ENCODE measurements at regions of chr2 and their contacts with region 1.

Region 1: DNA sequence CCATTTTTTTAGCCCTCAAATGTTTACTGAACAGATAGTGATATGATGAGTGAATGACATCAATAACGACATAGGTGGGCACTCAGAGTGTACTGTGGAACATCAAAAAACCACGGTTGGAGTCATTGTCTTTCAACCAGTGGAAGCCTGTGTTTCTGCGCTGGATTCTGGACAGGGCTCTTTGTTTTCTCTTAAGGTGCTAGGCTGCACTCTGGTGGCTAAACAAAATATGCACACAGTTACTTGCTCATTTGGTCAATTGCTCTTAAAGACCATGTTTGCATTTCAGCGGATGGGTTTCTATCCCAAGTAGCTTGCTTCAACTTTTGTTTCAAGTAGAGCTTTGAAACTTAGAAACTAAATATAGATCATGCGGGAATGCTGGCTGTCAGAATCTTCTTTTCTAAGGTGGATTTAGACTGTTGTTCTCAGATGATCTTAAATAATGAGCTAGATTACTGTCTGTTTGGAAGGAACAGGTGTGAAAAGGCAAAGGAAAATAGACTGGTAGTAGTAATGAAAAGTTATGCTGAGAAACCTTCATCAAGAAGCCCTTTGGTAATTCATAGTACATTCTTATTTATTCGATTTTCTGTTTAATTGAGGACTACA is 48.5 kb upstream of the LYPD6B start:
- DNase-seq: peak; percentile 80
- ATAC-seq: peak; percentile 90
- H3K4me3 ChIP-seq: no peak overlapping the region
- H3K27ac ChIP-seq: no peak overlapping the region
- H3K4me1 ChIP-seq: no peaks in the 10 kb centered on the region
- H3K27me3 ChIP-seq: no peaks in the 10 kb centered on the region
- CTCF ChIP-seq: peak; percentile 71
- POLR2A ChIP-seq: no peak
- RAD21 ChIP-seq: peak; percentile 80

Region 2: GRCh38 chr2:147937744-147938349 is 1052.1 kb before region 1 on chr2:
- CTCF ChIA-PET with region 1: interaction called, 5 read pairs
- POLR2A ChIA-PET with region 1: no interaction called
- dilution Hi-C with region 1: no loop called
- in situ Hi-C with region 1: no loop called
- intact Hi-C with region 1: loop called (anchors 1 kb)
- DNase-seq: peak; percentile 40
- ATAC-seq: peak; percentile 83
- H3K4me3 ChIP-seq: no peak overlapping the region
- H3K27ac ChIP-seq: no peak overlapping the region
- H3K4me1 ChIP-seq: no peaks in the 10 kb centered on the region
- H3K27me3 ChIP-seq: no peaks in the 10 kb centered on the region
- CTCF ChIP-seq: peak; percentile 84
- POLR2A ChIP-seq: no peak
- RAD21 ChIP-seq: peak; percentile 73

Region 3: DNA sequence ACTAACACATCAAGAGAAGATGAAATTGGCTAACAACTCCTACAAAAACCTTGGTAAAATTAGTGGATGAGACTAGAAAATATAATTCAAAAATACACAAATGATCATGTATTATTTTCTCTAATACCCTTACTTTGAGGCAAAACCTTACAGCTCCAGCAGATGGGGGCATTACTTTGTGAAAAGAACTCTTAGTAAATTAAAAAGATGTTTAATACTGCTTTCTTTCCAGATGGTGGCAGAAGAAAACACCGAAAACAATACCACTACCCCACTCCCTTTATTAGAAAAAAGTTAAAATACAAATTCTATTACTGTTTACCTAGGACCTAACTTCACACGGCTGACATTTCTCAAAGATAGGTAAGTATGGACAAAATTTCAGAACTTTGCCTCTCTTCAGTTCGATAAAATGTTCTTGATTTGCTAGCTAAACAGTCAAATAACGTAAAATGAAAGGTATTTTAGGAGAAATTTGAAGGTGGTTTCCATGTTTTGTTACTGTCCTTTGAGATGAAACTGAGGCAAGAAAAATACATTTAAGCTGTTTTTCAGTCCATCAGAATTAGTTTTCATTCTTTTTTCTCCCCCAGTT is 1000.1 kb before region 1 on chr2:
- CTCF ChIA-PET with region 1: no interaction called
- POLR2A ChIA-PET with region 1: no interaction called
- dilution Hi-C with region 1: no loop called
- in situ Hi-C with region 1: loop called (anchors 25 kb)
- intact Hi-C with region 1: loop called (anchors 1 kb)
- DNase-seq: peak; percentile 72
- ATAC-seq: peak; percentile 95
- H3K4me3 ChIP-seq: no peak overlapping the region
- H3K27ac ChIP-seq: no peak overlapping the region
- H3K4me1 ChIP-seq: no peaks in the 10 kb centered on the region; the same call in none of the 2 replicates
- H3K27me3 ChIP-seq: no peaks in the 10 kb centered on the region
- CTCF ChIP-seq: peak; percentile 99
- POLR2A ChIP-seq: no peak
- RAD21 ChIP-seq: peak; percentile 96

Region 4: DNA sequence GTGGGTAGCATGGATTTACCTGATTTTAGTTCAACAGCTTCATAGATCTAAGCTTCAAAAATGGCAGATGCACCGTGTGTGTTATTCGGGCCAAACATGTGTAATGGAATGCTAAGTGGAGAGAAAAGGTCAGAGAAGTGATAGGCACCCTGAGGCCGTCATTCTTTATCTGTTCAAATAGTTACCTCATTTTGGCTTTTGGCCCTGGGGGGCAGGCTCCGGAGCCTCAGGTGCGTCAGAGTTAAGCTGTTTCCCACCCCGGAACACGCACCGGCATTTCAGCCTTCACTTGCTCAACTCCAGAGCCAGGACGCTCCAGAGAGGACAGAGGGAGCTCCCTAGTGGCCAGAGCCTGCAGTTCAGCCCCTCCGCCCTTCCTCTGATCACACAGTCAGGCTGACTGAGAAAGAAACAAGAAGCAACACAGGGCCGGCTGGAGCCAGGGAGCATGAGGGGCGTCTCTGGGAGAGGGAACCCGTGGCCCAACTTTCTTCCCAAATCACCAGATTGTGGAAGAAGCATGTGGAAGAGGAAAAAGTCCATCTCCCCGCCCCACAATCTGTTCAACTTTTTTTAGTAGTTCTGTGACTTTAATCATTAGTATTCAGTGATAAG is 480.6 kb before region 1 on chr2:
- CTCF ChIA-PET with region 1: no interaction called
- POLR2A ChIA-PET with region 1: no interaction called
- dilution Hi-C with region 1: no loop called
- in situ Hi-C with region 1: no loop called
- intact Hi-C with region 1: loop called (anchors 5 kb)
- DNase-seq: peak; percentile 82
- ATAC-seq: peak; percentile 100
- H3K4me3 ChIP-seq: no peak overlapping the region; the same call in 1 of the 2 replicates
- H3K27ac ChIP-seq: no peak overlapping the region
- H3K4me1 ChIP-seq: no peaks in the 10 kb centered on the region
- H3K27me3 ChIP-seq: no peaks in the 10 kb centered on the region
- CTCF ChIP-seq: peak; percentile 95
- POLR2A ChIP-seq: no peak
- RAD21 ChIP-seq: peak; percentile 92

Region 5: DNA sequence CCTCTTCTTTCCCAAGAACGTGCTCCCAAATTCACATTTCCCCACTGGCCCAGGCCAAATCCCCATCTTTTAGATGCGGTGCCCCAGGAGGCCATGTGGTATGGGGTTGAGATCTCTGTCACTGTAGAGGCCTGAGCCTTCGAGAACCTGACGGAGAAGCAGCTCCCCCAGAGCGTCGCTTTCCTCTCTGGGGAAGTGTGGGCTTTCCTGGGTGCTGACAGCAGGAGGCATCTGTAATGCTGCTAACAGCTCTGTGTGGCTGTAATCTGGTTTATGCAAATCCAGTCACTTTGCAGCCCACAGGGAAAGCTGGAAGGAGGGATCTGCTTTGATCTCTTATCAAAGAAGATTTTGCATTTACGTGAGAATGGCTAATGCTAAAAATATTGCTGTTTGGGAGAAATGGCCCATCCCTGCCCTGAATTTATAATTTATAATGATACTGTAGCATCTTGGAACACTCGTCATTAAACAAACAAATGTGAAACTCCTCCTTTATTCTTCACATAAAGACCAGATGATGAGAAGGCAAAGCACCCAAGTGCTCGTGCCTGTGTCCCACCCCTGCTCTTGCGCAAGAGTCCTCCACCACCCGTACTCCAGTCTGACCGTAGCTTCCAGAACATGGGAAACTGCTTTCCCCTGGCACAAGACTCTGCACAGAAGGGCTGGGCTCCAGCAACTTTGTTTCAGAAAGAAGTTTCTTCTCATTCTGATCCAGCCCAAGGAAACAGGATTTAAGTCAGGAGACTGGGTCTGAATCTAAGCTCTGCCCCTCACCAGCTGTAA is 455.4 kb before region 1 on chr2:
- CTCF ChIA-PET with region 1: no interaction called
- POLR2A ChIA-PET with region 1: interaction called, 10 read pairs
- dilution Hi-C with region 1: no loop called
- in situ Hi-C with region 1: no loop called
- intact Hi-C with region 1: loop called (anchors 5 kb)
- DNase-seq: no peak
- ATAC-seq: peak; percentile 28; the same call in 1 of the 2 replicates
- H3K4me3 ChIP-seq: no peak overlapping the region
- H3K27ac ChIP-seq: no peak overlapping the region
- H3K4me1 ChIP-seq: no peaks in the 10 kb centered on the region
- H3K27me3 ChIP-seq: peaks cover 9% of the 10 kb centered on the region
- CTCF ChIP-seq: no peak
- POLR2A ChIP-seq: no peak
- RAD21 ChIP-seq: no peak

Region 6: GRCh38 chr2:148540022-148540421 is 450.0 kb before region 1 on chr2:
- CTCF ChIA-PET with region 1: no interaction called
- POLR2A ChIA-PET with region 1: interaction called, 10 read pairs
- dilution Hi-C with region 1: no loop called
- in situ Hi-C with region 1: no loop called
- intact Hi-C with region 1: no loop called
- DNase-seq: no peak
- ATAC-seq: no peak
- H3K4me3 ChIP-seq: no peak overlapping the region
- H3K27ac ChIP-seq: no peak overlapping the region
- H3K4me1 ChIP-seq: no peaks in the 10 kb centered on the region
- H3K27me3 ChIP-seq: peaks cover 11% of the 10 kb centered on the region
- CTCF ChIP-seq: no peak
- POLR2A ChIP-seq: no peak
- RAD21 ChIP-seq: no peak

Region 7: DNA sequence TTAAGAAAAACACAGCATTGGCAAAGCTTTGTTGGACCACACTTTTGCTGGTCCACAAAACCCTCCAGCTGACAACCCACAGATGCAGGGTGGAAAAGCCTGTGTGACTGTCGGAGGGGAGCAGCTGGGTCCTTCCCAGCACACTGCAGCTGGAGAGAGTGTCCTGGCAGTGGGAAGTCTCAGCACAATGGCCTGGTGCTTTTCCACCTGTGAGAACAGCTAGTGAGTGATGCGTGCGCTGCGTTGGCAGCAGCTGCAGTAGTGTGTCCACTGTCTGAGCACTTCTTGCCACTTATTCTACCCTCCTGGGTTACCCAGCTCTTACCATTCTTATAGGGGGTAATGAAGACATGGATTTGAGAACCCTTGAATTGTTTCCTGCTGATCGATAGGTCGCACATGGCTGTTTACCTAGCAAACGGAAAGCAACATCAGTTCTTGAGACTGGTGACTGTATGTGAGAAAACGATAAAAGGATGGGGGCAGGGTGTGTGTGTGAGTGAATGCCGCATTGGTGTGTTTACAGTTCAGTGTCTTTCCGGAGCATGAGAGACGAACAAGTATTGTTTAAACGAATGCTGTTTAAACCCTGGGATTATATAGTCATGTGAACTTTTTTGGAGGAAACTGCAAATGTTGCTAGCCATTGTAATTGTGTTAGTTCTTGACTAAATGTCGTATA is 410.1 kb after region 1 on chr2:
- CTCF ChIA-PET with region 1: no interaction called
- POLR2A ChIA-PET with region 1: no interaction called
- dilution Hi-C with region 1: no loop called
- in situ Hi-C with region 1: no loop called
- intact Hi-C with region 1: no loop called
- DNase-seq: no peak
- ATAC-seq: no peak; the same call in 1 of the 2 replicates
- H3K4me3 ChIP-seq: no peak overlapping the region
- H3K27ac ChIP-seq: no peak overlapping the region
- H3K4me1 ChIP-seq: no peaks in the 10 kb centered on the region
- H3K27me3 ChIP-seq: no peaks in the 10 kb centered on the region
- CTCF ChIP-seq: no peak
- POLR2A ChIP-seq: no peak
- RAD21 ChIP-seq: no peak